RWPE1 (cell line): ENCODE measurements at regions of chr7 and their contacts with region 1.

Region 1: DNA sequence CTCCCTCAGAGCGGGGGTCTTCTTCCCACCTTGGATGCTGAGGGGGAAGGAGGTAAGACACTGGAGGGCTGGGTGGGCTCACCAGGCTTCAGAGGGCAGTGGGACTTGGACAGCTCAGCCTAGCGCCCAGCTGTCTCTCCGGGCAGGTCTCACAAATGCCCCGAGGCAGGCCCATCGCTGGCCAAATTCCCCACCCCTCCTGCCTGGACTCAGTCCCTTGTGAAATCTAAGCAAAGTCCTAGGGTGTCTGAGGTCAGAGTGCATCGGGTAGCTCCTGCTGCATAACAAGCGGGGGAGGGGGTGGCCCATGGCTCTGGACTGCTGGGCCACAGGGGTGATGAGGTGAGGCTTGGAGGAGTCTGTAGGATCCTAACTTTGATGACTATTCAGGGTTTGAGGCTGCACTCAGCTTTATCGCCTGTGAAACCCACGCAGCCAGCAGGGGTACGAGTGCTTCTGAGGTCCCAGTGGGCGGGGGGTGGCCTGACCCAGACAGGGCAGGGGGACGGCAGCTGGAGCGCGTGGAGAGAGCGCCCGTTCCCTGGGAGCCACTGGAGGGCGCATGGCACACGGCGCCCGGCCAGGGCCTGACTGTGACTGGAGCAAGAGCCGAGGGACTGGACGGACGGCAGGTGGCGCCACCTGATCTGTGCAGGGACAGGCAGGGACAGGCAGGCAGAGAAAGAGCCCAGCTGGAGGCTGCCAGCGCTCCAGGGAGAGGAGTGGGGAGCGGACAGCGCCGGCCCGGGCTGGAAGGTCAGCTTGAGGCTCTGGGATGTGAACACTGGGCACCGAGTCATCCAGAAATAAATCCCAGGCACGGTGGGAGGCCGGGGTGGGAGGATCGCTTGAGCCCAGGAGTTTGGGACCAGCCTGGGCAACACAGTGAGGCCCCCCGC is 10.0 kb downstream of the CYP2W1 start:
- DNase-seq: peak; percentile 85
- H3K27ac ChIP-seq: peak overlapping the region; percentile 31; the same call in 1 of the 2 replicates
- CTCF ChIP-seq: peak; percentile 100

Region 2: GRCh38 chr7:805261-805660 is 187.7 kb before region 1 on chr7:
- CTCF ChIA-PET with region 1: no interaction called
- POLR2A ChIA-PET with region 1: no interaction called
- DNase-seq: no peak
- H3K27ac ChIP-seq: peak overlapping the region; percentile 23
- CTCF ChIP-seq: no peak

Region 3: GRCh38 chr7:1044191-1045068 is 51.5 kb after region 1 on chr7 and contains the start of gene GPR146:
- CTCF ChIA-PET with region 1: interaction called, 13 read pairs
- POLR2A ChIA-PET with region 1: no interaction called
- DNase-seq: peak; percentile 98
- H3K27ac ChIP-seq: peak within 1 kb of the TSS; percentile 88
- CTCF ChIP-seq: peak; percentile 78

Region 4: DNA sequence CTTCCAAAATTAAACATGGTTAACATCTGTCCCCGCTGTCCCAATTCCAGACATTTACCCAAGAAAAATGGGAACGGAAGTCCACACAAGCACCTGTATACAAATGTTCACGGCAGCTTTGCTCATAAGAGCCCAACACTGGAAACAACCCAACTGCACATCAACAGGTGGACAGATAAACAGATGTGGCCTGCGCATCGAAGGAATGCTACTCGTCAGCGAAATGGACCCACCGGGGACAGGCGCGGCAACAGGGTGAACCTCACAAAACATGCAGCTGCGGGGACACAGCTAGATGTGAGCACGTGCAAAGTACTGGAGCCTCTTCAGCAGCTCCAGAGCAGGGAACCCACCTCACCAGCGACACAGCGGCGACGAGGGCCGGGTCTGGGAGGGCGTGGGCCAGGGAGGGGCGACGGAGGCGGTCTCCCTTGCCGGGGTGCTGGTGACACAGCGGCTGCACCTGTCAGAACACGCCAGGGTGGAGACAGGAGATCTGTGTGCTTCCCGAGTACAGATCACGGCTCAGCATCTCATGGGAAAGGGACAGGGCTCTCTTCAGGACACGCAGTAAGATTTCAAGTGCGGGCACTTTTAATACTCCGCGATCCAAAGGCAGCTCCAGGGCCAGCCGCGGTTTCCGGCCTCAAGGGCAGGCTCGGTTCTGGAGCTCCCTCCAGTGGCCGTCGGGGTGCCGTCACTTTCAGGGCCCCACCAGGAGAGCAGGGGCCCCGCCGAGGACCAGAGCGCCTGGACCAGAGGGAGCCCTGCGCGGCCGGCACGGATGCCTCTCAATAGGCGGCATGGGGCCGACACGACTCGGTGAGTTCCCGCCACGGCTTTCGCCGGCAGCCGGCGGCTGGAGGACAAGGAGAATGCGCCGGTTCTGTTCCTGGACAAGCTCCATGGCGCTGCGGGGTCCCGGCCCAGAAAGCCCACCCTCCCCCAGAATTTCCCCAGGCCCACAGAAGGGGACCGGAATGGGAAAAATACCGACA is 72.6 kb after region 1 on chr7:
- CTCF ChIA-PET with region 1: interaction called, 80 read pairs
- POLR2A ChIA-PET with region 1: no interaction called
- DNase-seq: peak; percentile 87
- H3K27ac ChIP-seq: peak overlapping the region; percentile 73
- CTCF ChIP-seq: peak; percentile 94

Region 5: DNA sequence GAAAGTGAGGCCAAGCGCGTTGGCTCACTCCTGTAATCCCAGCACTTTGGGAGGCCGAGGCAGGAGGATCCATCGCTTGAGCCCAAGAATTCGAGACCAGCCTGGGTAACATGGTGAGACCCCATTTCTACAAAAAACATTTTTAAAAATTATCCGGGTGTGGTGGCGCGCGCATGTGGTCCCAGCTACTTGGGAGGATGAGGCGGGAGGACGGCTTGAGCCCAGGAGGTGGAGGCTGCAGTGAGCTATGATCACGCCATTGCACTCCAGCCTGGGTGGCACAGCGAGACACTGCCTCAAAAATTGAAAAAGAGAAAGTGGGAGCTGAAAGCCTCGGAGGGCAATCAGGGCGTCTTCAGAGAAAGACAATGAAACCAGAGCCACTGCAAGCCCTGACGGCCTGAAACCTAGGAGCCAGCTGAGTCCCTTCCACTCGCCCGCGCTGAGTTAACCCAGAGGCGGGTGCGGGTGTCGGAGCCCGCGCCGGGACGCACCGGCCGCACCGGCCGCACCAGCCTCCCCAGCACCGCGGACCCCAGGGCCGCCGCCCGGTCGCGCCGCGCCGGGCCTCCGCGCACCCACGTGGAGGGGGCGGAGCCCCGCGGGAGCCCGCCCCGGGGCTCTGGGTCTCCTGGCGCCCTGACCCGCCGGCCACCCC is 144.7 kb after region 1 on chr7:
- CTCF ChIA-PET with region 1: interaction called, 34 read pairs
- POLR2A ChIA-PET with region 1: no interaction called
- DNase-seq: no peak
- H3K27ac ChIP-seq: peak overlapping the region; percentile 69
- CTCF ChIP-seq: no peak

Region 6: DNA sequence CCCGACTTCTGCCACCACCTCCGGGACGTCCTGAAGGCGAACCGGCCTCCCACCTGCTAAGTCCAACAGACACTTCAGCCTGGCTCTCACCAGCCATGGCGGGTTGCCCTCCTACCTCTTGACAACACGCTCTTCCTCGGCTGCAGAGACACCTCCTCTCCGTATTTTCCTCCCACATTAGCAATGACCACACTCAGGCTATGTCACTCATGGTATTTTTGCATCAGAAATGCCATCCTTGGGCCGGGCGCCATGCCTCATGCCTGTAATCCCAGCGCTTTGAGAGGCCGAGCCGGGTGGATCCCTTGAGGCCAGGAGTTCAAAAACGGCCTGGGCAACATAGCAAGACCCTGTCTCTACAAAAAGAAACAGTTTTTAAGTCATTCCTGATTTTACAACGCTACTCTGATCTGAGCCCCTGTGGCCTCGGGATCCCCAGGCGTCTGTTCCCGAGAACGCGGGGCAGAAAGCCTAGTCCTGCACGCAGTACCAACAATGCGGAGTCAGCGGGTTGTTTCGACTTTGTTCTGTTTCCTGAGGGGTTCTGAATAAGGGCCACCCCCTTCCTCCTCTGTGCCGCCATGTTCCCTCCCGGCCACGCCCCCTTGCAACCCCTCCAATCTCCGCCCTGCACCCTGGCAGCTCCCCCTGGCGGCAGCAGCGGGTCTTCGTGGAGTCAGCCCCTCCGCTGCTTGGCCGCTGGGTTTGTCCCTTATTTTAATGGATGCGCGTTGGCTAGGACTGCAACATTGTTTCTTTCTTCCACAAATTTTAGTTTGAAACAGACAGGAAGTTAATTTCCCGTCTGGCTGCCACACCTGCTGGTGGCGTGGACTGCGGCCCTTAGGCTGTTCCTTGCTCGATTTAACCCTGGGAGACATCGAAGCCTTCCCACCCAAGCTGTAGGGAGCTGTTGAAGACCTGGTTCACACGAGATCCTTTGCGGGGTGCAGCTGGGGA is 176.7 kb after region 1 on chr7:
- CTCF ChIA-PET with region 1: interaction called, 13 read pairs
- POLR2A ChIA-PET with region 1: no interaction called
- DNase-seq: peak; percentile 75
- H3K27ac ChIP-seq: peak overlapping the region; percentile 22
- CTCF ChIP-seq: peak; percentile 84